Left ventricle myocardium superior (tissue), 1 donor: ENCODE measurements at regions of chr14 and their contacts with region 1.

Region 1: GRCh38 chr14:103292426-103293374 is 41.3 kb upstream of the EIF5 start:
- DNase-seq: peak; percentile 83
- ATAC-seq: peak; percentile 93

Region 2: GRCh38 chr14:103104654-103105452 is 187.8 kb before region 1 on chr14:
- intact Hi-C with region 1: loop called (anchors 2 kb)
- DNase-seq: peak; percentile 82
- ATAC-seq: peak; percentile 85

Region 3: DNA sequence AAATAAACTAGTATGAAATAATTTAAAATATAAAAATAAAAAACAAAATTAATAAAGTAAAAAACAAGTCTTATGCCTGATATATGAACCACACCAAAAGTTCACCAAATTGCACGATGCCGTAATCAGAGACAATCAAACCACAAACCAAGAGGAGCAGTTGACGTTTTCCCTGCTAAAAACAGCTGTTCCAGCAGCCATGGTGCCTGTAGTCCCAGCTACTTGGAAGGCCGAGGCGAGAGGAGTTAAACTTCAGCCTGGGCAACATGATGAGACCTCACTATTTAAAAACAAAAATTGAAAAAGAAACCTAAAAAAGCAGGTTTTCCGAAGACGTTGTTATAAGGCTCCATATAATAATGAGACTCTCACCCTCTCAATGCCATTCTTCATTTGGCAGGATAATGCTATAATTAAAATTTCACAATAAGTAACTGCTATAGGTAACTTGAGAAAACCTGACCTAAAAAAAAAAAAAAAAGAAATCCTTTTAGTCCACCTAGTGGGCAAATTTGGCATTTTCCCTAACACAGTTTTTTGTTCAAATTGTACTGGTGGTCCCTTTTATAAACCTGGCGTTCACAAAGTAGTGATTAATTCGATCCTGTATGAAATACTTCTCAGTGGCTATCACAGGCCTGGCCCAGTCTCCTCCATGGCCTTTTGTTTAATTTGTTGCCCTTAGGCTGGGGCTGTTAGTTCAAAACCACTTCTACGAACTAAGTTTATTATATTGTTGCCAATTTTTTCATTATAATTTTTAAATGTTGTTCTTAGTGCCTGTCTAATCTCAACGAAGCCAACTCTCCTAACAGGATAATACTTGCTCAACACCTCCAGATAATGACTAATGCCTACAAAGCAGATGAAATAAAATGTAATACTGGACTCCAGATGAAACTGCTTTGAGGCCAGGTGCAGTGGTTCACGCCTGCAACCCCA is 107.4 kb before region 1 on chr14:
- intact Hi-C with region 1: loop called (anchors 10 kb)
- DNase-seq: no peak
- ATAC-seq: no peak